Heart right ventricle (tissue), 16 donors: ENCODE measurements at regions of chr14 and their contacts with region 1.

Region 1: GRCh38 chr14:24673534-24674203 is 39.7 kb upstream of the GZMB start:
- DNase-seq: no peak
- ATAC-seq: no peak
- H3K4me3 ChIP-seq: peak overlapping the region in 1 of 10 donors; percentile 1
- H3K27ac ChIP-seq: peak overlapping the region in 2 of 10 donors; percentile 16 to 69
- H3K4me1 ChIP-seq: peaks cover 0 to 32% (median 3%) of the 10 kb centered on the region in 9 donors
- H3K27me3 ChIP-seq: no peaks in the 10 kb centered on the region
- CTCF ChIP-seq: no peak

Region 2: GRCh38 chr14:24605435-24606190 is 68.1 kb before region 1 on chr14:
- intact Hi-C with region 1: loop called in 3 of 10 experiments (anchors 2 to 5 kb)
- DNase-seq: peak in 1 of 2 donors; percentile 19
- ATAC-seq: no peak
- H3K4me3 ChIP-seq: no peak overlapping the region
- H3K27ac ChIP-seq: peak overlapping the region in 1 of 10 donors; percentile 44
- H3K4me1 ChIP-seq: peaks cover 0 to 14% (median 0%) of the 10 kb centered on the region in 9 donors
- H3K27me3 ChIP-seq: no peaks in the 10 kb centered on the region
- CTCF ChIP-seq: peak; percentile 32 to 88 (median 59)

Region 3: GRCh38 chr14:24721775-24722174 is 48.1 kb after region 1 on chr14:
- intact Hi-C with region 1: no loop called
- DNase-seq: no peak
- ATAC-seq: no peak
- H3K4me3 ChIP-seq: no peak overlapping the region
- H3K27ac ChIP-seq: no peak overlapping the region
- H3K4me1 ChIP-seq: no peaks in the 10 kb centered on the region
- H3K27me3 ChIP-seq: peaks cover 0 to 21% (median 6%) of the 10 kb centered on the region in 7 donors
- CTCF ChIP-seq: no peak

Region 4: DNA sequence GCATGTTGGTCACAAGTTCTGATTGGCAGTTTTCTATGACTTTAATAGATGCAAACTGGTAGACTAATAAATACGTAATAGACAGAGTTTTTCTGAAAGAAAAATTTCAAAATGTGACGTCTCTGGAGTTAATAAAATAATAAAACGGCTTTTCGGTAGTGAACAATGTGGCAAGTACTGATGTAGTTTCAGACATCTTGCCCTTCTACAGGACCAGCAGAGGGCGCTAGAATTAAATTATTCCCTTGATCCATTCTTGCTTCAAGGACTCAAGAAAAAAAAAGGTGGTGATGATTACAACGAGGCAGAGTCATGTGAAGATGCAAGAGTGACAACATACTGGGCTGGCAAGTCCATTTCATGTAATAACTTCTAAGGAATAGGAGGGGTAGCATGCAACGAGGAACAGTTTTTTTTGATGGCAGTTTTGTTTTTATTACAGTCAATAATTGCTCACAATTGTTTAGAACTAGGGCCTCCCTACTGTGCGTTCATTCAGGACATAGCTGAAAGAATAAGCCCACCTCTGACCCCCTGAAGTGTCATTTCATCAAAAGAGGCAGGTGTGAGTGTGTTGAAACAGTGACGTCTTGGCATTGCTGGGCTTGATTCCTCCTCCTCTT is 61.3 kb after region 1 on chr14:
- intact Hi-C with region 1: no loop called
- DNase-seq: peak in 1 of 2 donors; percentile 66
- ATAC-seq: peak in 6 of 8 donors; percentile 42 to 83 (median 72)
- H3K4me3 ChIP-seq: no peak overlapping the region
- H3K27ac ChIP-seq: no peak overlapping the region
- H3K4me1 ChIP-seq: peaks cover 0 to 5% (median 0%) of the 10 kb centered on the region in 9 donors
- H3K27me3 ChIP-seq: no peaks in the 10 kb centered on the region
- CTCF ChIP-seq: peak; percentile 58 to 91 (median 80)